Heart left ventricle (tissue), 16 donors: ENCODE measurements at regions of chr5 and their contacts with region 1.

Region 1: GRCh38 chr5:98954392-98955028 is 25.7 kb upstream of the CHD1 start:
- DNase-seq: no peak
- ATAC-seq: peak in 1 of 4 donors; percentile 20
- H3K4me3 ChIP-seq: no peak overlapping the region
- H3K27ac ChIP-seq: no peak overlapping the region
- H3K4me1 ChIP-seq: no peaks in the 10 kb centered on the region
- H3K27me3 ChIP-seq: no peaks in the 10 kb centered on the region
- CTCF ChIP-seq: no peak
- POLR2A ChIP-seq: no peak

Region 2: DNA sequence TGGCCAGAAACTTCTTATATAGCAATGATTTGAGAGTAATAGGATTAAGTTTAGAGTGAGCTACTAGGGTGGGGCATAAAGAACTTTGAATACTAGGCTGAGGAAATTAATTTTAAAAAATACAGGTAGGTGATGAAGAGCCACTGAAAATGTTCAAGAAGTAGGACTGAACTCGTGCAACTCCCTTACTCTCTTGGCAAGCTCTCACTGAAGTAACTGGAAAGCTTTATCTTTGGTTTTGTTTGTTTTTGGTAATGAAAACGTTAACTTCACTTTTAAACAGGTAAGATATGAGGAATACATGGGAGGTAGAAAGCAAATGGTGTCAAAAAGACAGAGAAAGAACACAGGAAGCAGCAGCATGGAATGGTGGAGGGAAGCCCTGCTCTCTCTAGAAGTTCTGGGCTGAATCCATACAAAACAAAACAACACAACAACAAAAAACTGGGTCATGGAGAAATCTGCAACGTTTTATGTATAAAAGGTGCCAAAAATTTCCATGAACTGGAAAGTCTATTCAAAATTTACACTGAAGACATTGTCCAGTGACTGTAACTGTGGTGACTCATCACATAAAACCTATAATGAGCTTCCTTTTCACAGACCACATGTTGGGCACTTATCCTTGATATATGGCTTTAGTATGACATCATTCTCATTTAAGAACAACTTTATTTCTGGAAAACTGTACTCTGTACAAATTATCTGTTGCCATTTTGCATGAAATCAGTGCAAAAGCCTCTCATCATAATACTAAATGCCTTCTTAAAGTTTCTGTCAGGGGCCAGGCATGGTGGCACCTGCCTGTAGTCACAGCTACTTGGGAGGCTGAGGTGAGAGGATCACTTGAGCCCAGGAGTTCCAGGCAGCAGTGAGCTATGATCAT is 65.5 kb after region 1 on chr5:
- intact Hi-C with region 1: loop called in 1 of 10 experiments (anchors 10 kb)
- DNase-seq: no peak
- ATAC-seq: peak in 1 of 4 donors; percentile 64
- H3K4me3 ChIP-seq: no peak overlapping the region
- H3K27ac ChIP-seq: no peak overlapping the region
- H3K4me1 ChIP-seq: peaks cover 0 to 22% (median 0%) of the 10 kb centered on the region in 12 donors
- H3K27me3 ChIP-seq: no peaks in the 10 kb centered on the region
- CTCF ChIP-seq: no peak
- POLR2A ChIP-seq: no peak

Region 3: GRCh38 chr5:99088309-99088708 is 133.8 kb after region 1 on chr5:
- intact Hi-C with region 1: no loop called
- DNase-seq: no peak
- ATAC-seq: no peak
- H3K4me3 ChIP-seq: no peak overlapping the region
- H3K27ac ChIP-seq: no peak overlapping the region
- H3K4me1 ChIP-seq: no peaks in the 10 kb centered on the region
- H3K27me3 ChIP-seq: no peaks in the 10 kb centered on the region
- CTCF ChIP-seq: no peak
- POLR2A ChIP-seq: no peak